Naive thymus-derived CD4-positive, alpha-beta T cell (primary cell): ENCODE measurements at regions of chr5 and their contacts with region 1.

Region 1: GRCh38 chr5:176415952-176416924 is at the start of gene CLTB:
- DNase-seq: peak; percentile 73 to 86 (median 84)
- ATAC-seq: peak; percentile 97
- H3K4me3 ChIP-seq: peak within 1 kb of the TSS; percentile 52
- H3K4me3 Mint-ChIP-seq: peak within 1 kb of the TSS; percentile 74 to 89 (median 84)
- H3K27ac ChIP-seq: peak within 1 kb of the TSS; percentile 86
- H3K27ac Mint-ChIP-seq: peak within 1 kb of the TSS; percentile 71 to 91 (median 87)
- H3K4me1 ChIP-seq: peaks cover 21 to 28% of the 10 kb centered on the region in 2 donors
- H3K4me1 Mint-ChIP-seq: peaks cover 17 to 53% (median 47%) of the 10 kb centered on the region in 7 donors
- H3K27me3 ChIP-seq: no peaks in the 10 kb centered on the region
- H3K27me3 Mint-ChIP-seq: peaks cover 0 to 19% (median 0%) of the 10 kb centered on the region in 5 donors
- total RNA-seq, gene CLTB: 30.6 to 67.2 (median 63.8) TPM

Region 2: GRCh38 chr5:176361437-176362232 is 54.6 kb before region 1 on chr5 and contains the start of gene KIAA1191:
- CTCF ChIA-PET with region 1: no interaction called
- POLR2A ChIA-PET with region 1: interaction called, 9 read pairs
- intact Hi-C with region 1: loop called (anchors 1 kb)
- DNase-seq: peak; percentile 80 to 96 (median 93)
- ATAC-seq: peak; percentile 96
- H3K4me3 ChIP-seq: peak within 1 kb of the TSS; percentile 82
- H3K4me3 Mint-ChIP-seq: peak within 1 kb of the TSS; percentile 93 to 99 (median 98)
- H3K27ac ChIP-seq: peak within 1 kb of the TSS; percentile 80
- H3K27ac Mint-ChIP-seq: peak within 1 kb of the TSS; percentile 91 to 99 (median 94)
- H3K4me1 ChIP-seq: peaks cover 19 to 24% of the 10 kb centered on the region in 2 donors
- H3K4me1 Mint-ChIP-seq: peaks cover 21 to 49% (median 38%) of the 10 kb centered on the region in 7 donors
- H3K27me3 ChIP-seq: no peaks in the 10 kb centered on the region
- H3K27me3 Mint-ChIP-seq: no peaks in the 10 kb centered on the region
- total RNA-seq, gene KIAA1191: 59.4 to 76.6 (median 65.9) TPM

Region 3: GRCh38 chr5:176388444-176389134 is 27.6 kb before region 1 on chr5 and contains the starts of genes HIGD2A and NOP16:
- CTCF ChIA-PET with region 1: no interaction called
- POLR2A ChIA-PET with region 1: interaction called, 5 read pairs
- intact Hi-C with region 1: loop called (anchors 1 kb)
- DNase-seq: peak; percentile 89 to 99 (median 98)
- ATAC-seq: peak; percentile 95
- H3K4me3 ChIP-seq: peak within 1 kb of the TSS; percentile 95
- H3K4me3 Mint-ChIP-seq: peak within 1 kb of the TSS; percentile 94 to 100 (median 99)
- H3K27ac ChIP-seq: peak within 1 kb of the TSS; percentile 93
- H3K27ac Mint-ChIP-seq: peak within 1 kb of the TSS; percentile 91 to 100 (median 99)
- H3K4me1 ChIP-seq: peaks cover 18% of the 10 kb centered on the region in 2 donors
- H3K4me1 Mint-ChIP-seq: peaks cover 14 to 42% (median 35%) of the 10 kb centered on the region in 7 donors
- H3K27me3 ChIP-seq: no peaks in the 10 kb centered on the region
- H3K27me3 Mint-ChIP-seq: no peaks in the 10 kb centered on the region
- total RNA-seq, gene HIGD2A: 86.8 to 124 (median 112) TPM
- total RNA-seq, gene NOP16: 12.8 to 35.3 (median 22.2) TPM

Region 4: GRCh38 chr5:176436661-176437071 is 20.4 kb after region 1 on chr5:
- CTCF ChIA-PET with region 1: no interaction called
- POLR2A ChIA-PET with region 1: no interaction called
- intact Hi-C with region 1: no loop called
- DNase-seq: no peak
- ATAC-seq: peak; percentile 53
- H3K4me3 ChIP-seq: peak overlapping the region; percentile 30
- H3K4me3 Mint-ChIP-seq: peak overlapping the region in 9 of 10 donors; percentile 50 to 80 (median 73)
- H3K27ac ChIP-seq: no peak overlapping the region
- H3K27ac Mint-ChIP-seq: peak overlapping the region in 3 of 9 donors; percentile 15 to 71 (median 28)
- H3K4me1 ChIP-seq: peaks cover 0 to 5% of the 10 kb centered on the region in 2 donors
- H3K4me1 Mint-ChIP-seq: peaks cover 7 to 13% (median 9%) of the 10 kb centered on the region in 7 donors
- H3K27me3 ChIP-seq: no peaks in the 10 kb centered on the region
- H3K27me3 Mint-ChIP-seq: peaks cover 0 to 15% (median 6%) of the 10 kb centered on the region in 5 donors

Region 5: DNA sequence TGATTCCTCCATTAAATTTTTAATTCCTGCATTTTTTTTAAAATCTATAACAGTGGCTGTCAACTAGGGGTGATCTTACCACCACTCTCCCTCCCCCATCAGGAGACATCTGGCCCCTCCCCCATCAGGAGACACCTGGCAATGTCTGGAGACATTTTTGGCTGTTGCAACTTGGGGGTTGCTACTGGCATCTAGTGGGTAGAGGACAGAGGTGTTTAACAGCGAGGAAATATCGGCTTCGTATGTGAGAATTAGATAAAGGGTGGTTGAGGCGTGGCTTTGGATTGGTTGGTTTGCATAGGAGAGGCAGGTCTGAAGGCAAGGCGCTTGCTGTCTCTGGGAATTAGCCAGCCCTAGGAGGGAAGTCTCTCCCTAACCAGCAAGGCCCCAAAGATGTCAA is 143.4 kb after region 1 on chr5:
- CTCF ChIA-PET with region 1: interaction called, 6 read pairs
- POLR2A ChIA-PET with region 1: no interaction called
- intact Hi-C with region 1: loop called in 1 of 2 experiments (anchors 1 kb)
- DNase-seq: peak in 6 of 9 donors; percentile 20 to 53 (median 40)
- ATAC-seq: peak; percentile 70
- H3K4me3 ChIP-seq: no peak overlapping the region
- H3K4me3 Mint-ChIP-seq: peak overlapping the region in 6 of 10 donors; percentile 4 to 72 (median 42)
- H3K27ac ChIP-seq: no peak overlapping the region
- H3K27ac Mint-ChIP-seq: peak overlapping the region in 5 of 9 donors; percentile 6 to 84 (median 68)
- H3K4me1 ChIP-seq: peaks cover 0 to 43% of the 10 kb centered on the region in 2 donors
- H3K4me1 Mint-ChIP-seq: peaks cover 22 to 56% (median 51%) of the 10 kb centered on the region in 7 donors
- H3K27me3 ChIP-seq: no peaks in the 10 kb centered on the region
- H3K27me3 Mint-ChIP-seq: peaks cover 0 to 10% (median 0%) of the 10 kb centered on the region in 5 donors

Region 6: DNA sequence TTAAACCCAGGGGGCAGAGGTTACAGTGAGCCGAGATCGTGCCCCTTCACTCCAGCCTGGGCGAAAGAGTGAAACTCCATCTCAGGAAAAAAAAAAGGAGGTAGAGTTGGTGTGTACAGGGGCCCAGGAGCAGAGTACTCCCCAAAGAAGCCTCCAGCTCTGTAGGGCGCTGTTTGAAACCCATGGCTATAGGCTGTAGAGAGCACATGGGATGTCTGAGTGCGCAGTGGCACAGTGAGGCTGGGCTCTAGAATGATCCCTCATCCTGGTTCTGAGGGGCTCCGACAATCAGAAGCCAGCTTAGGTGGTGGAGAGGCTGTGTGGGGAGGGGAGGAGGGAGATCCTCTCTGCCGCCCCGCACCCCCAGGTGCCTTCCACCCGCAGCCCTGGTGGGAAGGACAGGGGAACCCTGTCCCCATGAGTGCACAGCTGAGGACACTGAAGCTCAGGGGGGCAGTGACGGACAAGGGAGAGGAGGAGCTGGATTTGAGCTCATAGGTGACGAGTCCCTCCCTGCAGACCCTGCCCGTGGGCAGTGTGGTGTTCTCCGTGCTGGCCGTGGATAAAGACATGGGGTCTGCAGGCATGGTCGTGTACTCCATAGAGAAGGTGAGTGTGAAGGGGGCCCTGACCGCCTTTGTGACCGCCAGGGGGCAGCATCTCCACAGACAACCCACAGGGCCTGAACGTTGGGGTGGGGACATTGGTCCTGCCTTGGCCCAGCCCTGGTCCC is 157.5 kb after region 1 on chr5:
- CTCF ChIA-PET with region 1: interaction called, 10 read pairs
- POLR2A ChIA-PET with region 1: no interaction called
- intact Hi-C with region 1: loop called (anchors 1 to 2 kb)
- DNase-seq: peak; percentile 48 to 80 (median 67)
- ATAC-seq: peak; percentile 88
- H3K4me3 ChIP-seq: no peak overlapping the region
- H3K4me3 Mint-ChIP-seq: no peak overlapping the region
- H3K27ac ChIP-seq: no peak overlapping the region
- H3K27ac Mint-ChIP-seq: peak overlapping the region in 1 of 9 donors; percentile 46
- H3K4me1 ChIP-seq: no peaks in the 10 kb centered on the region
- H3K4me1 Mint-ChIP-seq: peaks cover 0 to 11% (median 6%) of the 10 kb centered on the region in 7 donors
- H3K27me3 ChIP-seq: no peaks in the 10 kb centered on the region
- H3K27me3 Mint-ChIP-seq: peaks cover 0 to 4% (median 0%) of the 10 kb centered on the region in 5 donors